MCF 10A (cell line): ENCODE measurements at regions of chr5 and their contacts with region 1.

Region 1: DNA sequence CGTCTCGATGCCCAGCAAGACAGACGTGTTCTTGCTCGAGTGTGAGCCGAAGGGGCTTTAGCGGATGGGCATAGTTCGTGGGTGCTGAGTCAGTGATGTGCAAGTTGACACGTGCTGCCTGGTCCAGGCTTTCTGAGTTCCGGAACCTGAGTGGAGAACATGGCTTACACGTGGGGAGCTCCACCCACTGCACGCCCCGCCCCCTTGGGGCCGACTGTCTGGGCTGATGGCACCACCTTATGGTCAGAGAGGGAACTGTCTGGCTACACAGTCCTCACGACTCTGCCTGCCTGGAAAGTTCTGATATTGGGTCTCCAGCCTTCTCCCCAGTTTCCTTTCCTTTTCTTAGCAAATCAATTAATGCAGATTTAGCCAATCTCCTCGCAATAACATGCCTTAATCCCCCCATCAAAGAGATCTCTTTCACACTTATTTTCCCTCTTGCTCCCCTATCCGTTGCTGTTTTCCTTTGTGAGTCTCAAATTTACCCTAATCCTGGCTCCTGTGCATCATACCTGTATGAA is 3.8 kb upstream of the STC2 start:
- DNase-seq: peak; percentile 96
- H3K4me3 Mint-ChIP-seq: no peak overlapping the region
- H3K27ac Mint-ChIP-seq: peak overlapping the region; percentile 26
- H3K4me1 Mint-ChIP-seq: peaks cover 45% of the 10 kb centered on the region
- H3K27me3 Mint-ChIP-seq: no peaks in the 10 kb centered on the region
- CTCF ChIP-seq: peak; percentile 96

Region 2: GRCh38 chr5:172707285-172708182 is 624.5 kb before region 1 on chr5:
- CTCF ChIA-PET with region 1: interaction called, 12 read pairs
- POLR2A ChIA-PET with region 1: interaction called, 6 read pairs
- intact Hi-C with region 1: loop called (anchors 1 kb)
- DNase-seq: peak; percentile 89
- H3K4me3 Mint-ChIP-seq: no peak overlapping the region
- H3K27ac Mint-ChIP-seq: no peak overlapping the region
- H3K4me1 Mint-ChIP-seq: peaks cover 7% of the 10 kb centered on the region
- H3K27me3 Mint-ChIP-seq: no peaks in the 10 kb centered on the region
- CTCF ChIP-seq: peak; percentile 88

Region 3: DNA sequence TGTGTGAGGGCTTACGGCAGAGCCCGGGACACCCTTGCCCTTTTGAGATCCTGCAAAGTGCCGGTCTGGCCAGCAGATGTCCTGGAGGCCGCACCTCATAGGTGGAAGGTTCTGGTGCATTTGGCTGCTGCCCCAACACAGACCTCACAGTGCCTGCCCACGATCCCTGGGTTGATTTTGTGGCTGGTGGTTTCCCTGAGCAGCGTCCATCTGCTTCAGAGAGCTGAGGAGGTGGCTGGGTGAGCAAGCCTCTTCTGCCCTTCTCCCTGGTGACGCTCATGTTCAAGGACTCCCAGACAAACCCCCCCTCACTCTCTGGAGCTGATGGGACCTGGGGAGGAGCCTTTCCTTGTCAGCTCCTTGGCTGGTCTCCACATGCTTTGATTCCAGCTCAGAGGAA is 168.8 kb before region 1 on chr5:
- CTCF ChIA-PET with region 1: interaction called, 34 read pairs
- POLR2A ChIA-PET with region 1: interaction called, 3 read pairs
- intact Hi-C with region 1: loop called (anchors 1 kb)
- DNase-seq: no peak
- H3K4me3 Mint-ChIP-seq: no peak overlapping the region
- H3K27ac Mint-ChIP-seq: no peak overlapping the region
- H3K4me1 Mint-ChIP-seq: no peaks in the 10 kb centered on the region
- H3K27me3 Mint-ChIP-seq: no peaks in the 10 kb centered on the region
- CTCF ChIP-seq: no peak

Region 4: DNA sequence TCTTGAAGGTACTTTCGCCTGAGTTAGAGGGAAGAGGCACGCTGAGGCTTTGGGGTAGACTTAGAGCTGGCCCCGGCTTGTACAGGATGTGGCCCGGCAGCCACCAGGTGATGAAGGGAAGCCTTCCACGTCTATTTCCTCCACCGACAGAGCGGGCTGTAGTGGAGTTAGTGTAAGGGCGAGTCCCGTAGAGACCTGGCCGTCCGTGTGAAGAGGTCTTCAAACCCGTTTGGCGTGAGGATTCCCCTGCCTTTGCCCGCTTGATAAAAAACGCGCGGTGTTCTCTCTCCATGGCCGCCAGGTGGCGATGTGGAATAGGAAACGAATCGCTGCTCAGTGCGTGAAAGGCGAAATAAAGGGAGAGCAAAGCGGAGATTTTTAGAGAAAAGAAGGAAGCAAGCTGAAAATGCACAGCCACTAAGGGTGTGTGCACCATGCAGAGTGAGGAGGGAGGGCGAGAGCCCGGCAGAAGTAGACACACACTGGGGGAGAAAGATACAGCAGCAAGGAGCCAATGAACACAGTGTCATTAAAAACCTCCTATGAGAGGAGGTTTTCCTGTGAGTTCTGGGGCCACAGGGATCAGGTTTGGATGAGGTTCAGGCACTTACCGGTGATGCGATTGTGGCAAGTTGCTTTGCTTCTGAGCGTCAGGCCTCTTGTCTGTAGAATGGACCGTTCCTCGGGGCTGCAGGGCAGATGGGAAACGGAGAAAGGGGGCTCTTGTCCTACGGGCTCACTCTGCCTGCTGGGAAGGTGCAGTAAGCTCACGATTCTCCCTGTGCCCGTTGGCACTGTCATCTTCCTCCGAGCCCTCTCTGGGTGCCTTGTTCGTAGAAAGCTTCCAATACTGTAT is 38.0 kb before region 1 on chr5:
- CTCF ChIA-PET with region 1: interaction called, 251 read pairs
- POLR2A ChIA-PET with region 1: interaction called, 164 read pairs
- intact Hi-C with region 1: loop called (anchors 1 kb)
- DNase-seq: peak; percentile 94
- H3K4me3 Mint-ChIP-seq: peak overlapping the region; percentile 9
- H3K27ac Mint-ChIP-seq: peak overlapping the region; percentile 24
- H3K4me1 Mint-ChIP-seq: peaks cover 21% of the 10 kb centered on the region
- H3K27me3 Mint-ChIP-seq: no peaks in the 10 kb centered on the region
- CTCF ChIP-seq: peak; percentile 93

Region 5: GRCh38 chr5:173315495-173316350 is 16.3 kb before region 1 on chr5:
- CTCF ChIA-PET with region 1: interaction called, 13 read pairs
- POLR2A ChIA-PET with region 1: interaction called, 60 read pairs
- intact Hi-C with region 1: no loop called
- DNase-seq: peak; percentile 43
- H3K4me3 Mint-ChIP-seq: no peak overlapping the region
- H3K27ac Mint-ChIP-seq: peak overlapping the region; percentile 10
- H3K4me1 Mint-ChIP-seq: peaks cover 17% of the 10 kb centered on the region
- H3K27me3 Mint-ChIP-seq: no peaks in the 10 kb centered on the region
- CTCF ChIP-seq: no peak

Region 6: GRCh38 chr5:173391031-173391430 is 59.0 kb after region 1 on chr5:
- CTCF ChIA-PET with region 1: no interaction called
- POLR2A ChIA-PET with region 1: no interaction called
- intact Hi-C with region 1: no loop called
- DNase-seq: no peak
- H3K4me3 Mint-ChIP-seq: no peak overlapping the region
- H3K27ac Mint-ChIP-seq: no peak overlapping the region
- H3K4me1 Mint-ChIP-seq: no peaks in the 10 kb centered on the region
- H3K27me3 Mint-ChIP-seq: no peaks in the 10 kb centered on the region
- CTCF ChIP-seq: no peak

Region 7: DNA sequence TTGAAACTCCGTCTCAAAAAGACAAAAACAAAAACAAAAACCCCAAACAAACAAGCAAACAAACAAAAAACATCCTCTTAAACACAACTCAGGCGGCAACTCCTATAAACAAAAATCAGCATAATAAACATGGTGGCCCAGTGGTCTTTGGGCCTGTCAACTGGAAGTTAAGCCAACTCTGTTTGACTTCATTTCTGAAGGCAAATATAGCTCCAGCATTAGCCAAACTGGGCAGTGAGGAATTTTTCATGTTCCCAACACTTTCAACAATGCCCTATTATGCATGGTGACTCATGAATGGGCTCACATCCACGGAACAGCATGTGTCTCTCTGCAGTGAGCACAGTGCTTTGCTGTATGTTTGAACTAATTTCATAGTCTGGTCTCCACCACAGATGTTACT is 140.1 kb after region 1 on chr5:
- CTCF ChIA-PET with region 1: interaction called, 5 read pairs
- POLR2A ChIA-PET with region 1: interaction called, 11 read pairs
- intact Hi-C with region 1: loop called (anchors 5 kb)
- DNase-seq: peak; percentile 97
- H3K4me3 Mint-ChIP-seq: peak overlapping the region; percentile 47
- H3K27ac Mint-ChIP-seq: peak overlapping the region; percentile 94
- H3K4me1 Mint-ChIP-seq: peaks cover 51% of the 10 kb centered on the region
- H3K27me3 Mint-ChIP-seq: no peaks in the 10 kb centered on the region
- CTCF ChIP-seq: no peak

Region 8: GRCh38 chr5:173573126-173573960 is 241.3 kb after region 1 on chr5:
- CTCF ChIA-PET with region 1: interaction called, 14 read pairs
- POLR2A ChIA-PET with region 1: interaction called, 16 read pairs
- intact Hi-C with region 1: loop called (anchors 1 kb)
- DNase-seq: peak; percentile 75
- H3K4me3 Mint-ChIP-seq: peak overlapping the region; percentile 7
- H3K27ac Mint-ChIP-seq: no peak overlapping the region
- H3K4me1 Mint-ChIP-seq: peaks cover 12% of the 10 kb centered on the region
- H3K27me3 Mint-ChIP-seq: no peaks in the 10 kb centered on the region
- CTCF ChIP-seq: peak; percentile 99